Activated CD4-positive, alpha-beta T cell treated with anti-CD3 and anti-CD28 coated beads, Interleukin-2, amount 10 ng/mL, durations not matched to agents 24 days and 14 days (primary cell): ENCODE measurements at regions of chr6 and their contacts with region 1.

Region 1: DNA sequence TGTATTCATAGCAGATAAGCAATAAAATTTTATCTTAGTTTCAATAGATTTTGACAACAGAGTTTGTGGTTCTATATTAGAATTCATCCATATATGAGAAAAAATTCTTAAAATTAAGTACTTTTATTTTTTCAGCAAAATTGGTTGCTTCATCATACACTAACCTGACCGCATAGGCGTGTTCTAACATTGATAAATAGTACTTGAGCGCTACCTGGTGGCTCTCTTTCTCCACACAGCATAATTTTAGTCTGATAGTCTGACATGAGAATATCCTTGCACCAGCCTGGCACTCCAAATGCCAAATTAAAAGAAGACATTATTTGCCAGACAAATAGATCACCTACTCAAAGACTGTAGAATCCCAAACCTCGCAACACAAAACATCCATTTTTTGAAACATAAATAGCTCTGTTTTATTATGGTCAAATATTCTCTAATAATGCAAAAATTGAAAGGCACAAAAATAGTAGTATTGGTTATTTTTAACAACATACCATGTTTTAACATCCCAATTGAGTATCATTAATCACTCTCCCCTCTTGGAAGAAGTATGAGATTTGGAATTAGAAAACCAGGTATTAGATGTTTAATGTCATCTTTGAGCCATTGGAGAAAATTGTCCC is 33.0 kb upstream of the FILIP1 start:
- DNase-seq: peak; percentile 87
- H3K4me3 Mint-ChIP-seq: no peak overlapping the region
- H3K27ac Mint-ChIP-seq: no peak overlapping the region
- H3K4me1 Mint-ChIP-seq: no peaks in the 10 kb centered on the region
- H3K27me3 Mint-ChIP-seq: peaks cover 31% of the 10 kb centered on the region

Region 2: GRCh38 chr6:75266716-75267291 is 259.8 kb before region 1 on chr6:
- intact Hi-C with region 1: loop called (anchors 1 kb)
- DNase-seq: no peak
- H3K4me3 Mint-ChIP-seq: no peak overlapping the region
- H3K27ac Mint-ChIP-seq: no peak overlapping the region
- H3K4me1 Mint-ChIP-seq: peaks cover 27% of the 10 kb centered on the region
- H3K27me3 Mint-ChIP-seq: no peaks in the 10 kb centered on the region

Region 3: DNA sequence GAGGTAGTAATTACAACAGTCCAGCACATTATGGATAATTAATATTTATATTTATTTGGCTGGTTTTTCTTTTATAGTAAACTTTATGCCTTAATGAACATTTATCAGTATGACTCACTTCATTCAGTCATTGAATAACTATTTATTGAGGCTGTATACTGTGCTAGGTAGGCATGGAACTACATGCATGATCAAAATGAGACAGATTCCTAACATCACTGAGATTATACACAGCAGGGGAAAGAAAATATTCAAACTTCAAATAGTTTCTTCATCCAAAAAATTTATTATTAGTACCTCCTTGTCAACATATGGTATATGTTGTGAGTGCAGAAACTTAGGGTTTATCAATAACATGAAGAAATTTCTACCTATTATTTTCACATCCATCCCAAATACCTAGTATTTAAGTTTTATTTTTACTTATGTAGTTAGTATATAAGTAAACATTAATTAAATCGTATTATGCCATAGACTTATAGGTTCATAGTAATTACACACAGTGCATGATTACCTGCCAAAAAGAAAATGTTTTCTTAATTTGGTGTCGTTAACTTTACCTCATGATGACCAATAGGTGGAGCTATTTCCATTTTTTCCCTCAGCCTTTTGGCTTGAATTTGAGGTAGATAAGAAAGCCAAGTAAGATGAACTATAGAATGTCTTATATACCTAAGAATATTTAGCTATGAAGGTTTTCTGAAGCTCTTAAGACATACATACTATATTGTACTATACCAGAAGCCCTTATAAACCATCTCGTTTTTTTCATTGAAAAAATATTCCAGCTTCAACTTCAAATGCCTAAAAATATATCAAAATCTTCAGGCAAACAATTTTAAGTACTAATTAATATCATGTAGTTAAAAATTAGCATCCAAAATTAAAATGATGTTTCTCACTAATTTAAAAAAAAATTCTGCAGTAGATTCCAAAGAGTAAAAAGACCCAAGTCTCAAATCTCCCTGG is 229.5 kb before region 1 on chr6:
- intact Hi-C with region 1: loop called (anchors 1 kb)
- DNase-seq: peak; percentile 67
- H3K4me3 Mint-ChIP-seq: no peak overlapping the region
- H3K27ac Mint-ChIP-seq: no peak overlapping the region
- H3K4me1 Mint-ChIP-seq: no peaks in the 10 kb centered on the region
- H3K27me3 Mint-ChIP-seq: no peaks in the 10 kb centered on the region

Region 4: DNA sequence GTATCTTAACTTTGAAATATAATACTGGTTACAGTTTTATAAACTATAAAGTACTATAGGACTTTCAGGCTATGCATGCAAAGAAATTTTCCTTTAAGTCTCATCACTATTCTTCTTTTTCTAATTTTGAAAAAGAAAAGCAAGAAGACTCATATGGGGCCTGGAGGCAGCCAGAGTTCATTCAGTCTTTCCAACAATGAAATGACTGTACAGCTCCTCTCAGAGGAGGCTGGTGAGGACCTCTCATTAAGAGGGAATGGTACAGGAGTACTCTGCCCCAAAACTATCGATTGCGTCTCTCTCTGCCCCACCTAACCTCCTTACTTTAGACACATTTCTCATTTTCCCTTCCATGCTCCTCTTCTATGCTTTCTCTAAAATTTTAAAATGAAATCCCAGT is 99.3 kb before region 1 on chr6:
- intact Hi-C with region 1: no loop called
- DNase-seq: no peak
- H3K4me3 Mint-ChIP-seq: no peak overlapping the region
- H3K27ac Mint-ChIP-seq: no peak overlapping the region
- H3K4me1 Mint-ChIP-seq: peaks cover 12% of the 10 kb centered on the region
- H3K27me3 Mint-ChIP-seq: peaks cover 3% of the 10 kb centered on the region

Region 5: DNA sequence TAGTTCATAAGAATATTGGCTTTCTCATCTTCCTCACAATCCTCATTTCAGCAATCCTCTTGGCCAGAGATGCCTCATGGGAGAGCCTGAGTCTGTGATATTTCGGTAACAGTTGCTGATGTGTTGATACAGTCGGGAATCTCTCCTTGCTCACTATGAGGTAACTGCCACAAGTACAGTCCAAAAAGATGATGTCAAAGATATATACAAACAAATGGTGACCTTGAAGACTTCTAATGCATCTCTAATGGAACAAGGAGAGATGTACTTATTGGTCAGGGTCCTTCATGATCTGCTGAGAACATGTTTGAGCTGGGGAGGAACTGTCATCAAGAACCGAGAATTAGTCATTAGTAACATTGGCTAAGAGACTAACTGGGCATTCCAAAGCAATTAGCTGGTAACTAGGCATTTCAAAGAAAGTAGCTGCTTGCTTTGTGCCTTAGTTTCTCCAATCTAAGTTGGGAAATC is 89.2 kb before region 1 on chr6:
- intact Hi-C with region 1: no loop called
- DNase-seq: no peak
- H3K4me3 Mint-ChIP-seq: no peak overlapping the region
- H3K27ac Mint-ChIP-seq: no peak overlapping the region
- H3K4me1 Mint-ChIP-seq: no peaks in the 10 kb centered on the region
- H3K27me3 Mint-ChIP-seq: peaks cover 8% of the 10 kb centered on the region